ENCODE measurements at regions of chr10 and their contacts with region 1.

Region 1: GRCh38 chr10:122342293-122343134 is 32.0 kb upstream of the PLEKHA1 start:
- DNase-seq: peak; percentile 71
- H3K4me3 ChIP-seq: no peak overlapping the region
- H3K27ac ChIP-seq: no peak overlapping the region
- H3K4me1 ChIP-seq: no peaks in the 10 kb centered on the region
- H3K27me3 ChIP-seq: no peaks in the 10 kb centered on the region
- CTCF ChIP-seq: peak; percentile 64 to 84
- POLR2A ChIP-seq: no peak

Region 2: GRCh38 chr10:122352817-122353525 is 10.5 kb after region 1 on chr10:
- CTCF ChIA-PET with region 1: interaction called, 10 read pairs
- POLR2A ChIA-PET with region 1: no interaction called
- dilution Hi-C with region 1: no loop called
- intact Hi-C with region 1: no loop called
- DNase-seq: no peak
- H3K4me3 ChIP-seq: no peak overlapping the region
- H3K27ac ChIP-seq: no peak overlapping the region
- H3K4me1 ChIP-seq: no peaks in the 10 kb centered on the region
- H3K27me3 ChIP-seq: peaks cover 0 to 5% of the 10 kb centered on the region in 2 experiments
- CTCF ChIP-seq: no peak
- POLR2A ChIP-seq: no peak

Region 3: DNA sequence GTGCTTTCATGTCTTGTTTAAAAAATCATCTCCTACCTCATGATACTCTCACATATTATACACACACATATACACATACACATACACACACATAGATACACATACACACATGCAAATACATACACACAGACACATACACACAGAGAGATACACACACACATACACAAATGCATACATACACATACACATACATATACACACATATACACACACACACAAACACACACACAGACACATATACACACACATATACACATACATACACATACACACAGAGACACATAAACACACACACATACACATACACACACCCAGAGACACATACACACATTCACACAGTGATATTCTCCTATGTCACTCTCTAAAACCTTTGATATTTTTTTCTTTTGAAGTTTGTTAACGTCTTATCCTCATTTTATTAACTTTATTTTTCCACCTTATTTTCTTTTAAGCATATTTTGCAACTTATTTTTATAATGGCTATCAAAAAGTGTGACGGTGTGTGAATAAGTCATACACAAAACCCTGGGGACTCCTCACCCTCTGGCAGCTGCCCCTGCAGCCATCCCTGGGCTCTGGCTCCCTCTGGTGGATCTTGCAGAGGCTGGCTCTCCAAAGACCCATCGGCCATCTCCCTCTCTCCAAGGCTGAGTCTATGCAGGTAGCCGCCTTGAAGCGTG is 361.1 kb after region 1 on chr10:
- CTCF ChIA-PET with region 1: no interaction called
- POLR2A ChIA-PET with region 1: no interaction called
- dilution Hi-C with region 1: no loop called
- intact Hi-C with region 1: loop called (anchors 1 kb)
- DNase-seq: peak; percentile 55
- H3K4me3 ChIP-seq: no peak overlapping the region
- H3K27ac ChIP-seq: no peak overlapping the region
- H3K4me1 ChIP-seq: no peaks in the 10 kb centered on the region
- H3K27me3 ChIP-seq: peaks cover 0 to 2% of the 10 kb centered on the region in 2 experiments
- CTCF ChIP-seq: peak; percentile 74 to 90
- POLR2A ChIP-seq: no peak

Measured in endothelial cell of umbilical vein (primary cell).